Caco-2 (cell line): ENCODE measurements at regions of chr19 and their contacts with region 1.

Region 1: GRCh38 chr19:17909003-17909732 is 23.6 kb upstream of the CCDC124 start:
- DNase-seq: no peak
- H3K4me3 ChIP-seq: no peak overlapping the region
- H3K4me3 Mint-ChIP-seq: no peak overlapping the region
- H3K27ac Mint-ChIP-seq: no peak overlapping the region
- H3K4me1 ChIP-seq: no peaks in the 10 kb centered on the region
- H3K4me1 Mint-ChIP-seq: no peaks in the 10 kb centered on the region
- H3K27me3 ChIP-seq: no peaks in the 10 kb centered on the region
- H3K27me3 Mint-ChIP-seq: no peaks in the 10 kb centered on the region
- CTCF ChIP-seq: no peak

Region 2: GRCh38 chr19:17879466-17879865 is 29.7 kb before region 1 on chr19:
- CTCF ChIA-PET with region 1: no interaction called
- POLR2A ChIA-PET with region 1: no interaction called
- intact Hi-C with region 1: no loop called
- DNase-seq: no peak
- H3K4me3 ChIP-seq: no peak overlapping the region
- H3K4me3 Mint-ChIP-seq: no peak overlapping the region
- H3K27ac Mint-ChIP-seq: no peak overlapping the region
- H3K4me1 ChIP-seq: no peaks in the 10 kb centered on the region
- H3K4me1 Mint-ChIP-seq: no peaks in the 10 kb centered on the region
- H3K27me3 ChIP-seq: no peaks in the 10 kb centered on the region
- H3K27me3 Mint-ChIP-seq: peaks cover 3% of the 10 kb centered on the region
- CTCF ChIP-seq: no peak

Region 3: DNA sequence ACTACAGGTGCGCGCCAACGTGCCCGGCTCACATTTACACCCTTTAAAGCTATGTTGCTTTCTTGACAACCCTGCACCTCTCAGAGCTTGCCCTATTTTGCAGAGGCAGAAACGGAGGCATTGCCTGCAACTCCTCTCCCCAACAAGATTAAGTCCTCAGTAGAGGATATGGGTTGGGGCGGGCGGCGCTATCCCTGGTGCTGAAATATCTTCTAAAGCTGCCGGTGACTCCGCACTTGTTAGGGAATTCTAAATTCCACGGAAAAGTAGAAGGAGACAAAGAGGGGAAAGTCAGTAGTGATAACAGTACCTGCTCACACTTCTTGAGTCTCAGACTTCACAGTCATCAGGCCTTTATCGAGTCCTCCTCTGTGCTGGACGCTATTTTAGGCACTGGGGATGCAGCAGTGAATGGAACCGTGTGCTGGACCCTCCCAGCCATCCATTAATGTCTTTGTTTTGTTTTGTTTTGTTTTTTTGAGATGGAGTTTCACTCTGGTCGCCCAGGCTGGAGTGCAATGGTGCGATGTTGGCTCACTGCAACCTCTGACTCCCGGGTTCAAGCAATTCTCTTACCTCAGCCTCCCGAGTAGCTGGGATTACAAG is 19.5 kb before region 1 on chr19:
- CTCF ChIA-PET with region 1: no interaction called
- POLR2A ChIA-PET with region 1: interaction called, 10 read pairs
- intact Hi-C with region 1: no loop called
- DNase-seq: peak; percentile 59 to 70
- H3K4me3 ChIP-seq: no peak overlapping the region
- H3K4me3 Mint-ChIP-seq: no peak overlapping the region
- H3K27ac Mint-ChIP-seq: no peak overlapping the region
- H3K4me1 ChIP-seq: no peaks in the 10 kb centered on the region
- H3K4me1 Mint-ChIP-seq: no peaks in the 10 kb centered on the region
- H3K27me3 ChIP-seq: no peaks in the 10 kb centered on the region
- H3K27me3 Mint-ChIP-seq: peaks cover 12% of the 10 kb centered on the region
- CTCF ChIP-seq: no peak

Region 4: DNA sequence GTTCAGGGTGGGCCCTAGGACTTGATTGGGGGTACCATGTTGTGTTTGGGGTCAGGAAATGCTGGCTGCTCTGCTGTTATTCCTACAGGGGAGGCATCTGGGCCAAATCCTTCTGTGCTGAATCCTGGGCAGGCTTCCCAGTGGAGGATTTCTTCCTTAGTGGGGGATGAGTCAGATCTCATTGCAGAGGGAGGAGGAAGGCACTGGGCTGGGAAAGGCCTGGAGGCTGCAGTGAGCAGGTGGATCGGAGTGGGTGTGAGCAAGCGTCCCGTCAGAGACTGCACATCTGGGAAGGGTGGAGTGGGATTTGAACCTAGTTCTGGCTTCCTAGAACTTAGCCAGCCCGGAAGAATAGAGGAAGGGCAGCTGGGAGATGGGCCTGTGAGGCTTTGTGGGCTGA is 35.1 kb after region 1 on chr19:
- CTCF ChIA-PET with region 1: no interaction called
- POLR2A ChIA-PET with region 1: no interaction called
- intact Hi-C with region 1: no loop called
- DNase-seq: no peak
- H3K4me3 ChIP-seq: no peak overlapping the region
- H3K4me3 Mint-ChIP-seq: no peak overlapping the region
- H3K27ac Mint-ChIP-seq: no peak overlapping the region
- H3K4me1 ChIP-seq: no peaks in the 10 kb centered on the region; the same call in 1 of the 2 replicates
- H3K4me1 Mint-ChIP-seq: no peaks in the 10 kb centered on the region
- H3K27me3 ChIP-seq: no peaks in the 10 kb centered on the region
- H3K27me3 Mint-ChIP-seq: peaks cover 2% of the 10 kb centered on the region
- CTCF ChIP-seq: no peak

Region 5: GRCh38 chr19:18685597-18686190 is 776.5 kb after region 1 on chr19:
- CTCF ChIA-PET with region 1: no interaction called
- POLR2A ChIA-PET with region 1: no interaction called
- intact Hi-C with region 1: no loop called
- DNase-seq: no peak
- H3K4me3 ChIP-seq: no peak overlapping the region
- H3K4me3 Mint-ChIP-seq: no peak overlapping the region
- H3K27ac Mint-ChIP-seq: no peak overlapping the region
- H3K4me1 ChIP-seq: peaks cover 6% of the 10 kb centered on the region
- H3K4me1 Mint-ChIP-seq: no peaks in the 10 kb centered on the region
- H3K27me3 ChIP-seq: no peaks in the 10 kb centered on the region
- H3K27me3 Mint-ChIP-seq: no peaks in the 10 kb centered on the region
- CTCF ChIP-seq: no peak